Vagina (tissue), 2 donors: ENCODE measurements at regions of chr7 and their contacts with region 1.

Region 1: DNA sequence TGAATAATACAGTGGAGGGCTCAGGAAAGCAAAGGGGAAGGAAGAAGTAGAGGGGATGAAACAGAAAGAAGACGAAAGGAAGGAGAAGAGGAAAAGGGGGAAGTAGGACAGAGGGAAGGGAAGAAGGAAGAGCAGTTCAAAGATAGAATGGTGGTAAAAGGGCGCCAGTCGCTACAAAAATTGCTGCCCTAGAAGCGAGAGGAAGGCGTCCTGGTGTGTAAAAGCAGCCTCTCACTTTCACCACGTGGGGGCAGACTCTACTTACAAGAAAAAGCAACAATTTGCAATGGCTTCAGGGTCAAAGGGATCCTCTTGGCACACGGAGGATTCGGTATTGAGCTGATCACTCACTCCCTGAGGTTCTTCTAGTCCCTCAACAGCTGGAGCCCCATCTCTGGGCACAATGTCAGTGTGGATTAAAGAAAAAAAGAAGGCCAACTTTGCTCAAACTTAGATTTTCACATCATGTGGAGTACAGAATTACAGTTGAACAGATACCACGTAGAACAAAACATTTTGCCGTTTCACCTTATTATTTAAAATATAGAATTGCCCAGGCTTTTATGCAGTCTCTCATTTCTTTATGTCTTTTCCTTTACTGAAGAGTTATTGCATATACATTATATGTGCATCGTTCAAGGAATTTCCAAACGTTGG is 31.4 kb upstream of the NPVF start:
- DNase-seq: no peak
- H3K4me3 ChIP-seq: no peak overlapping the region
- H3K27ac ChIP-seq: no peak overlapping the region
- H3K4me1 ChIP-seq: peaks cover 14% of the 10 kb centered on the region
- H3K27me3 ChIP-seq: no peaks in the 10 kb centered on the region
- CTCF ChIP-seq: peak; percentile 49 to 60 (median 56)
- POLR2A ChIP-seq: no peak

Region 2: GRCh38 chr7:24082826-24083225 is 1176.9 kb before region 1 on chr7:
- intact Hi-C with region 1: no loop called
- DNase-seq: no peak
- H3K4me3 ChIP-seq: no peak overlapping the region
- H3K27ac ChIP-seq: no peak overlapping the region
- H3K4me1 ChIP-seq: no peaks in the 10 kb centered on the region
- H3K27me3 ChIP-seq: no peaks in the 10 kb centered on the region
- CTCF ChIP-seq: no peak
- POLR2A ChIP-seq: no peak

Region 3: GRCh38 chr7:25389489-25390106 is 129.9 kb after region 1 on chr7:
- intact Hi-C with region 1: loop called (anchors 5 kb)
- DNase-seq: no peak
- H3K4me3 ChIP-seq: no peak overlapping the region
- H3K27ac ChIP-seq: no peak overlapping the region
- H3K4me1 ChIP-seq: peaks cover 21% of the 10 kb centered on the region
- H3K27me3 ChIP-seq: no peaks in the 10 kb centered on the region
- CTCF ChIP-seq: peak in 1 of 3 experiments; percentile 46
- POLR2A ChIP-seq: no peak

Region 4: GRCh38 chr7:25565949-25566348 is 306.2 kb after region 1 on chr7:
- intact Hi-C with region 1: loop called (anchors 5 kb)
- DNase-seq: no peak
- H3K4me3 ChIP-seq: no peak overlapping the region
- H3K27ac ChIP-seq: no peak overlapping the region
- H3K4me1 ChIP-seq: no peaks in the 10 kb centered on the region
- H3K27me3 ChIP-seq: no peaks in the 10 kb centered on the region
- CTCF ChIP-seq: peak; percentile 96 to 99 (median 99)
- POLR2A ChIP-seq: no peak